Aorta (tissue), 5 donors: ENCODE measurements at regions of chr10 and their contacts with region 1.

Region 1: GRCh38 chr10:118241229-118242137 is 100.6 kb downstream of the FAM204A start:
- DNase-seq: peak; percentile 77 to 90
- ATAC-seq: peak; percentile 84
- H3K4me3 ChIP-seq: no peak overlapping the region
- H3K27ac ChIP-seq: no peak overlapping the region
- H3K4me1 ChIP-seq: no peaks in the 10 kb centered on the region
- H3K27me3 ChIP-seq: peaks cover 0 to 2% of the 10 kb centered on the region in 2 donors

Region 2: DNA sequence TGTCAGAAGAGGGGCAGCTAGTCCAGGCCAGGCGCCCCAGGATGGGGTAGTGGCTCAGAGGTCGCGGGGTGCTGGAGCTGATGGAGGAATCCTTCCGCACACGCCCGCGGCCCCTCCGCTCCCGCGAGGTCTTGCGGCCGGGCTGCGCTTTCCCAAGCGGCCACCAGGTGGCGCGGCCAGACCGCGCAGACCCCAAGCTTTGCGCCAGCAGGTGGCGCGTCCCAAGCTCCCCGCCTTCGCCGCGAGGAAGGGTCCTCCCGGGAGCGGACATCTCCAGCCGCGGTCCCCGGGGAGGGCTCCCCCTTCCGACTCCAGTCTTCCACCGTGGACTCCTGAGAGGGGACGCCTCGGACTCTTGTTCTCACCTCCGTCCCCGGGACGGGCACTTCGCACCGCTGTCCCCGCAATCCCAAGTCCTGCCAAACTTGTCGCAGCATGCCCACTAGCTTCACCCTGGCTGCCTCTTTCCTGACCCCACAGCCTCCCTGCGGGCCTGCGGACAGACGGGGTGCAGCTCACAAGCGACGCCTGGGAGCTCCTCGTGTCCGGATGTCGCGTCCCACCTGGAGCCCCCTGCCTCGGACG is 1024.8 kb before region 1 on chr10:
- intact Hi-C with region 1: loop called (anchors 10 kb)
- DNase-seq: peak; percentile 68 to 90
- ATAC-seq: peak; percentile 91
- H3K4me3 ChIP-seq: no peak overlapping the region
- H3K27ac ChIP-seq: no peak overlapping the region
- H3K4me1 ChIP-seq: no peaks in the 10 kb centered on the region
- H3K27me3 ChIP-seq: no peaks in the 10 kb centered on the region